Ascending aorta (tissue), 2 donors: ENCODE measurements at regions of chr16 and their contacts with region 1.

Region 1: GRCh38 chr16:21554795-21555585 is 44.4 kb upstream of the METTL9 start:
- DNase-seq: peak in 1 of 2 donors; percentile 96
- H3K4me3 ChIP-seq: peak overlapping the region; percentile 26 to 41
- H3K27ac ChIP-seq: no peak overlapping the region
- H3K4me1 ChIP-seq: peaks cover 0 to 19% of the 10 kb centered on the region in 2 donors
- H3K27me3 ChIP-seq: no peaks in the 10 kb centered on the region
- CTCF ChIP-seq: peak; percentile 93 to 100 (median 93)

Region 2: DNA sequence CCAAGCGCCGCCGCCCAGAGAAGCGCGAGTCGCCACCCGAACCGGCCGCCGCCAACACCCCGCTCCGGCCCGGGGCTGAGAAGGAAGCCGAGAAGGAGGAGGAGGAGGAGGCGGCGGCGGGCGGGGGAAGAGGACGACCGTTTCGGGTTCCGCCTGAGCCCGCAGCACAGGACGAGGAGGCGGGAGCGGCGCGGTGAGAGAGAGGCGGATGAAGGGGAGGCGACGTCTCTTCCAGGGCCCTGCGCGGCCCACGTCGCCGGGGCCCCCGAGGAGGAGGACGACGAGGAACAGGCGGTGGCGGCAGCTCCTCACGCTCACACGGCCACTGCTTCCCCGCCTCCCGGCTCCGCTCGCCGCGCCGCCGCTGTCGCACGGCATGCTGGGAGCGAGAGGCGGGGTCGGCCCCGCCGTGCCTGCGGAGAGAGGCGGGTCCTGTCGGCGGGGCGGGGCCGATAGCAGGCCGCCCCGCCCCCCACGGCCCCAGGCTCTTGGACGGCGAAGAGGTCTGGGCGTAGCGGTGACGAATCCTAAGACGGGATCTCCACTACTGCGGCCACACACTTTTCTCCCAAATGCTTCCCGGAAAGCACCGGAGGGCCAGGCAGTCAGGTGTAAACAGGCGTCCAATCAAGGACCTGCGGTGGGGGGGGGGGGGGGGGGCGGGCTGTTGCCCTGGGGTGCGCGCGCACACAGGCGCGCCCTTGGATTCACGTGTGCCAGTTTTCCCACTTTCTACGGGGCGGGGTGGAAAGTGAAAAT is 52.9 kb before region 1 on chr16:
- intact Hi-C with region 1: loop called (anchors 10 kb)
- DNase-seq: peak; percentile 75 to 95
- H3K4me3 ChIP-seq: peak overlapping the region; percentile 64 to 90
- H3K27ac ChIP-seq: peak overlapping the region; percentile 93 to 97
- H3K4me1 ChIP-seq: peaks cover 0 to 4% of the 10 kb centered on the region in 2 donors
- H3K27me3 ChIP-seq: no peaks in the 10 kb centered on the region
- CTCF ChIP-seq: no peak

Region 3: DNA sequence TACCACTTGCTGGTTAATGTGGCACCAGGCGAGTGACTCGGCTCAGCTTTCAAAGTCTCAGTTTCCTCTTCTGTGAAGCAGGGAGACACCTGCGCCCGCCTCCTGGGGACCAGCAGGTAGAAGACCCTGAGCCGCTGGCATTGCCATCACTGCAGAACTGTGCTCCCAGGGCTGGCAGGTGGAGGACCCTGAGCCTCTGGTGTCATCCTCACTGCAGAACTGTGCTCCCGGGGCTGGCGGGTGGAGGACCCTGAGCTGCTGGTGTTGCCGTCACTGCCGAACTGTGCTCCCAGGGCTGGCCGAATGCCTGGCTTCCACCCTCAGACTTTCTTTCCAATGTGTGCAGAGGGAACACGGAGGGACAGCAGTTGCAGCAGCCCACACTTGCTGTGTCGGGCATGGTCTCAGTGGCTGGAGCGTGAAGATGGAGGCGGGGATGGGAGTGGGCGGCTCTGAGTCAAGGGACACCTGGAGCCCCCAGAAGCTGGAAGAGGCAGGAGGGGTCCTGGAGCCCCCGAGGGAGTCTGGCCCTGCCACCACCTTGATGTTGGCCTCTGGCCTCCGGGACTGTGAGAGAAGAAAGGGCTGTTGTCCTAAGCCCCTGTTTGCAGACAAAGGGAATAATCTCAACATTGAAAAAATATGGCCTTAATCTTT is 31.5 kb before region 1 on chr16:
- intact Hi-C with region 1: loop called (anchors 2 kb)
- DNase-seq: no peak
- H3K4me3 ChIP-seq: no peak overlapping the region
- H3K27ac ChIP-seq: no peak overlapping the region
- H3K4me1 ChIP-seq: peaks cover 0 to 3% of the 10 kb centered on the region in 2 donors
- H3K27me3 ChIP-seq: no peaks in the 10 kb centered on the region
- CTCF ChIP-seq: no peak

Region 4: DNA sequence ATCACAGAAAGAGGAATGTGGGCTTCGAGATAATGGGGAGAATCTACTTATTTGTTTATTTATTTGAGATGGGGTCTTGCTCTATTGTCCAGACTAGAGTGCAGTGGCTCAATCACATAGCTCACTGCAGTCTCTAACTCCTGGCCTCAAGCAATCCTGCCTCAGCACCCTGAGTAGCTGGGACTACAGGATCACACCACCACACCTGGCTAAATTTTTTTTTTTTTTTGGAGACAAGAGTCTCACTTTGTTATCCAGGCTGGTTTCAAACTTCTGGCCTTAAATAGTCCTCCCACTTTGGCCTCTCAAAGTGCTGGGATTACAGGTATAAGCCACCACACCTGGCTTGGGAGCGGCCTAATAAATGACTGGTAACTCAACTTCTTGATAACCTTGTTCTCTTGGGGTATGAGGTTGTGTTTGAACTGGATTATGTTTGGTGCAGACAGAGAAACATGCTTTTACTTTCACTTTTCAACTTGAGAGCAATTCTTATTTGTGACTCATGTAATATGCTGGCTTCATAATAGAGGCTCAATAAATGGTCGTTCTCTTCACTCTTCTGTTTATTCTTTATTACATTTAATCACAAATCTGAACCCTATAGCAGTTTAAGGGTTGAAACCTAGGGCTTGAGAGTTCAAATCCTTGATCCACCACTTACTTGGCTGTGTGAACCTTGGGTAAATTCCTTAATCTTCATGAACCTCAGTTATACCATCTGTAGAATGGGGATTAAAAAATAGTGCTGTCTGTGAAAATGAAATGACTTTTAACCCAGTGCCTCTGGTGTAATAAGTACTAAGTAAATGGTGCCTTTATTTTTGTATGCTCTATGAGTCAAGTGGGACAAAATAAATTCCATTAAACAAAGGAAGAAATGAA is 1129.8 kb after region 1 on chr16:
- intact Hi-C with region 1: loop called (anchors 1 kb)
- DNase-seq: peak in 1 of 2 donors; percentile 64
- H3K4me3 ChIP-seq: no peak overlapping the region
- H3K27ac ChIP-seq: peak overlapping the region; percentile 67 to 71
- H3K4me1 ChIP-seq: peaks cover 7 to 16% of the 10 kb centered on the region in 2 donors
- H3K27me3 ChIP-seq: no peaks in the 10 kb centered on the region
- CTCF ChIP-seq: no peak

Region 5: DNA sequence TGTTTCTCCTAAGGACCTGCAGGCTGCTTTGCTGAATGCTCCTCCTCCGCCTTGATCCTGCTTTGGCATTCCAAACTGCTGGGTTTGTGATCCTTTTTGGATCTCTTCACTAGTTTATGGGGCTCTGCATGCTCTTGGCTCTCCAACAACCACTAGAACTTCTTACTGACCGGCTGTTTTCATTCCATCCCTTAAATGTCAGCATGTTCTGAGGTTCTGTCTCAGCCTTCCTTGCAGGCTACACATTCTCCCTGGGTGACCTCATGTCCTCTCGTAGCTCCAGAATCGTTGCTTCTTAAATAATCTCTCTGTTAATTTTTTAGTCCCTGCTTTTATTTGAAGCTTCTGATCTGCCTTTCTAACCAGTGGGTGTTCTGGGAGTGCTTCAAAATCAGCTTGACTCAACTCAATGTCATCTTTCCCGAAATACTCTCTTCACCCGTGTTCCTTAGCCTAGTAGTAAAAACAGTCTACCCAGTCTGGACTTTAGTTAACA is 1139.9 kb after region 1 on chr16:
- intact Hi-C with region 1: loop called (anchors 1 kb)
- DNase-seq: peak in 1 of 2 donors; percentile 91
- H3K4me3 ChIP-seq: peak overlapping the region in 1 of 2 donors; percentile 32
- H3K27ac ChIP-seq: peak overlapping the region; percentile 81 to 91
- H3K4me1 ChIP-seq: peaks cover 0 to 23% of the 10 kb centered on the region in 2 donors
- H3K27me3 ChIP-seq: no peaks in the 10 kb centered on the region
- CTCF ChIP-seq: no peak